ENCODE measurements at regions of chr1 and their contacts with region 1.

Region 1: DNA sequence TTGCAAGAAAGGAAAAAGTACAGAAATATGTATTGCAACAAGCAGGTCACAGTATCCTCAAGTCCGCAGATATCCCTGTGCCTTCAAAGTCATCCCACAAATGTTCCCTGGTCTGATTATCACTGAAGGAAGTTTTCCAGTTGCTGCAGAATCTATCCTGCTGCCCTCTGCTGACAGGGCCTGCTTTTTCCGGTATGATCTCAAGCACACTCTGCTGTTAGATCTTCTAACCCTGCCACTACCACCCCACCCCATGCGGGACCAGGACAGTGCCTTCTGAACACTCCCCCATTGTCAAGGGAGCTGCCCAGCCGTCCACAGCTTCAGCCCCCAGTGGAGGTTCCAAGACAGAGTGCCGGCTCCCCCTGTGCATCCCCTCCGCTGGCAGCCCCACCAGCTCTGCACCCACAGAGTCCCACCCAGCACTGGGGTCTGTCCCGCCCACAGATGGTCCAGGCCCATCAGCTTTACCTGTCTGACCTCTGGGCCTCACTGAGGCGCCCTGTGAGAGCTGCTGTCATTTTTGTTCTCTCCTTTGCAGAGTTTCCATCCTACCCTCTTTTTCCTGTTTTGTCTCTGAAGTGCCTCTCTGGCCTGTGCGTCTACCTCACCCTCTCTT is 27.9 kb downstream of the FAM163A start:
- DNase-seq: no peak
- H3K4me3 ChIP-seq: no peak overlapping the region
- H3K27ac ChIP-seq: no peak overlapping the region
- H3K4me1 ChIP-seq: no peaks in the 10 kb centered on the region
- CTCF ChIP-seq: no peak

Region 2: GRCh38 chr1:179753061-179753460 is 17.9 kb before region 1 on chr1:
- CTCF ChIA-PET with region 1: no interaction called
- POLR2A ChIA-PET with region 1: no interaction called
- intact Hi-C with region 1: loop called (anchors 2 kb)
- DNase-seq: no peak
- H3K4me3 ChIP-seq: no peak overlapping the region
- H3K27ac ChIP-seq: no peak overlapping the region
- H3K4me1 ChIP-seq: no peaks in the 10 kb centered on the region
- CTCF ChIP-seq: no peak